ENCODE measurements at regions of chr12 and their contacts with region 1.

Region 1: DNA sequence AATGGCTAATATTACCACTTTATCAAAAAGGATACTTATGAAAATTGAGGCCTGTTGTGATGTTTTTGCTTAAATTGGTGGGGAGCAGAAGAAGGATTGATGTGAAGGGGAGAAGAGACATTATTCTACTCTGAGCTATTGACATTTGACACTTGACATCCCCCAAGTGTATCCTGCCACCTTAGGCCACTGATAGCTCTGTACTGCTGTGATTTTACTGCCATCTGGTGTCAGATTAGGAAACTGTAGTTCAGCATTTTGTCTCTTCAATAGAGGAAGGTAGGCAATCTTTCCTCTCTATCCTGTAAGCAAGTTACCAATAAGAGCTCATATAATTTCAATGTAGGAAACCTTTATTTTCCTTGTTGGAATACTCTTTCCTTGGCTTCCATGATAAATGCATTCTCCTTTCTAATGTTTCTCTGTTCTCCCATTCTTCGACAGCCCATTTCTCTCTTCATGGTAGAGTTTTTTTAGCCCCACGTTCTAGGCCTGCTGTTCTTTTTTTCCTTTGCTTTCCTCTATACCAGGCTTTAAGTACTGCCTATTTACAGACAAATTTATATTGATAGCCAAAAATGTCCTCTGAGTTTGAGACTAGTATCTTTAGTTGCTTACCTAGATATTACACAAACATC is 46.3 kb downstream of the PPHLN1 start:
- DNase-seq: peak; percentile 33
- H3K4me3 Mint-ChIP-seq: no peak overlapping the region
- H3K27ac Mint-ChIP-seq: no peak overlapping the region
- H3K4me1 Mint-ChIP-seq: peaks cover 3% of the 10 kb centered on the region
- H3K27me3 Mint-ChIP-seq: no peaks in the 10 kb centered on the region

Region 2: GRCh38 chr12:41277116-41277945 is 1094.9 kb before region 1 on chr12:
- CTCF ChIA-PET with region 1: no interaction called
- intact Hi-C with region 1: loop called (anchors 1 kb)
- DNase-seq: peak; percentile 28
- H3K4me3 Mint-ChIP-seq: no peak overlapping the region
- H3K27ac Mint-ChIP-seq: no peak overlapping the region
- H3K4me1 Mint-ChIP-seq: no peaks in the 10 kb centered on the region
- H3K27me3 Mint-ChIP-seq: no peaks in the 10 kb centered on the region

Region 3: DNA sequence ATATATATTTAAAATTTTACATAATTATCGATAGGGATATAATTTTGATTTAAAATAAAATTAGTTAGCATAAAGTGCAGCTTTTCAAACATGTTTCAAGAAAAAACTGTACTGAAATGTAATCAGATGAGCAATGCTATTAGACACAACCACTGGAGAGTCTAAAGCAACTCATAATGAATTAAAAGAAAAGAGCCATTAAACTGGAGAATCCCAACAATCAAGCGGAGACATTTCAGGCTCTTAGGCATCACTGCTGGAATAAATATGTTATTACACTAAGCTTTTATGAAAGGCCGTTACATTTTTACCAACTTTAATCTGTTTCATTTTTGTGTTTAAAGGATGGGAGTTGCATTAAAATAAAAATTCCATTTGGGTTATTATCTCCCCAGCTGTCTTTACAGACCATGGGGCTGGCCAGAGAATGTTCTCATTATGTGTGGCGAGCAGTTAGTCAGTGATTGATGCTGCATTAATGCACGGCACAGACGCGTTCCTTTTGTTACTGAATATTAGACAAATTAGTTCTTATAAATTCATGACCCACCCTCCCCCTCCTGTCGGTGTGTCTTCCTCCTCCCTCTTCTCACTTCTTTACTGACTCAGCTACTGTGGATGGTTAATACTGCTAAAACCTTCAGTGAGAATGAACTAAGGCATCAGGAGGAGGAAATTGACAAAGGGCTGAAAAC is 1027.3 kb before region 1 on chr12:
- CTCF ChIA-PET with region 1: no interaction called
- intact Hi-C with region 1: no loop called
- DNase-seq: no peak
- H3K4me3 Mint-ChIP-seq: no peak overlapping the region
- H3K27ac Mint-ChIP-seq: no peak overlapping the region
- H3K4me1 Mint-ChIP-seq: no peaks in the 10 kb centered on the region
- H3K27me3 Mint-ChIP-seq: no peaks in the 10 kb centered on the region

Region 4: GRCh38 chr12:42023733-42024494 is 348.4 kb before region 1 on chr12:
- CTCF ChIA-PET with region 1: interaction called, 15 read pairs
- intact Hi-C with region 1: loop called (anchors 2 kb)
- DNase-seq: peak; percentile 80
- H3K4me3 Mint-ChIP-seq: peak overlapping the region; percentile 51
- H3K27ac Mint-ChIP-seq: no peak overlapping the region
- H3K4me1 Mint-ChIP-seq: peaks cover 8% of the 10 kb centered on the region
- H3K27me3 Mint-ChIP-seq: peaks cover 7% of the 10 kb centered on the region

Region 5: DNA sequence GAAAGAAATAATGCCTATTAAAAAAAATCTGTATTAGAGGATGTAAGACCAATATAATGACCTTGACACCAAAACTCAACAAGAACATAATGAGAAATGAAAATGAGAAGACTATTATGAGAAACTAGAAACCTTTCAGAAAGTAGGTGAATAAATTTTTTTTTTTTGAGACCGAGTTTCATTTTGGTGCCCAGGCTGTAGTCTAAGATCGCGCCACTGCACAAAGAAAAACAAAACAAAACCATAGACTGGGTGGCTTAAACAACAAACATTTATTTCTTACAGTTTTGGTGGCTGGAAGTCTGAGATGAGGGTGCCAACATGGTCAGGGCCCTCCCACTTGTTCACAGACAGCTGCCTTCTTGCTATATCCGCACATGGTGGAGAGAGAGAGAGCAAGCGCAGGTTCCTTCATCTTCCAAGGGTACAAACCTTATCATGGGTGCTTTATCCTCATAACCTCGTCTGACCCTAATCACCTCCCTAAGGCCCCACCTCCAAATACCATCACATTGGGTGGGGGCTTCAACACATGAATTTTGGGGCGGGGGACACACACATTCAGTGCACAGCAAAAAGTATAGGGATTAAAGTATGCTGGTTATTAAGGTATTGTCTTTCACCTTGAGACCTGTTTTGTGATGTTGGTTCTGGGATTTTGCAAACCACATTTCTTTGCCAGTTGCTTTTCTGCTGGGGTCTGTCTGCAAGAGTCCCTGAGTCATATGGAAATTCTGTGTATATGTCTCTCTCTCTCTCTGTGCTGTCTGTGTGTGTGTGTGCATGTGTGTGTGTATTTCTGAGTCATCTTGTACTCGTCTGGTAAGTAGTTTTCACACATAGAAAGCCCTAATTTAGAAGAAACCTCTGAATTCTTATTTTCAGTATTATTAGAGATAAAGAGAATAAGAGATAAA is 72.6 kb before region 1 on chr12:
- CTCF ChIA-PET with region 1: interaction called, 5 read pairs
- intact Hi-C with region 1: loop called (anchors 2 kb)
- DNase-seq: peak; percentile 91
- H3K4me3 Mint-ChIP-seq: no peak overlapping the region
- H3K27ac Mint-ChIP-seq: peak overlapping the region; percentile 36
- H3K4me1 Mint-ChIP-seq: peaks cover 14% of the 10 kb centered on the region
- H3K27me3 Mint-ChIP-seq: no peaks in the 10 kb centered on the region

Region 6: GRCh38 chr12:42315108-42315507 is 57.2 kb before region 1 on chr12:
- CTCF ChIA-PET with region 1: no interaction called
- intact Hi-C with region 1: no loop called
- DNase-seq: no peak
- H3K4me3 Mint-ChIP-seq: no peak overlapping the region
- H3K27ac Mint-ChIP-seq: no peak overlapping the region
- H3K4me1 Mint-ChIP-seq: no peaks in the 10 kb centered on the region
- H3K27me3 Mint-ChIP-seq: no peaks in the 10 kb centered on the region

Region 7: DNA sequence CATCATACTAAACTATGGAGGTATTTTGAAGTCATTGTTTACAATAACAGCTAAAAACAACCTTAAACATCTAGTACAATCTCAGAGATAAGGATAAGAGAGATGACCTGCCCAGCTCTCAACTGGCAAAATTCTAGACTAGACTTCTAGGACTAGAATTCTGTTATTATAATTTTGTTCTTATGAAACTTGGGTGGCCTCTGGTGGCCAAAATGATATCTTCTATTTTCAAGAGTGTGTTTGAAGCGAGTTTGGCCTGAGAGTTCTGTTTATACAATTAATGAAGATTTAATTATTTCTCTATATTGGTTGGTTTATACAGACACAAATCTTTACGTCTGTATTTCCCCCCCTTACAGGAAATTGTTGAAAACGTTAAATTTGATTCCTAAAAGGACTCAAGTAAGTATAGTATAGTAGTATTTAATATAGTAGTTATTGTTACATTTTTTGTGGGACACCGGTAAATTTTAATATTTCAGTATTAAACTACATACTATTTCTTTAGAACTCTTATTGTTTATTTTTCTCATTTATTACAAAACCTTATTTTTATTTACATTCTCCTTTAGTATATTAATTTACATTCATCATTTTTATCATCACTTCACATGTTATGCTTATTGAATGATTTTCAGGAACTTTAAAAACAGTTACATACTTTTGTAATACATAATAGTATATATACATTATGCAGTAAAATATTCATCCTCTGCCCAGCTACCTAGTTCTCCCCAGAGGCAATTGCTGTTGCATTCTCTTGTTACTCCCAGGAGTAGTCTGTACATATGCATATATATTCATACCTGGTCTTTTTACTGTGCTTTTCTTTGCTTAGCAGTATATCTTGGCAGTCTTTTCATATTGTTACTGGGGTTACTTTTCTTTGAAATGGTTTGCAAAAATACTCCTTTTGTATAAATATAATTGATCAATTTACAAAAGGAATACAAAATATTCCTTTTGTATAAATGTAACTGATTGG is 39.7 kb before region 1 on chr12:
- CTCF ChIA-PET with region 1: interaction called, 16 read pairs
- intact Hi-C with region 1: no loop called
- DNase-seq: peak; percentile 32
- H3K4me3 Mint-ChIP-seq: no peak overlapping the region
- H3K27ac Mint-ChIP-seq: no peak overlapping the region
- H3K4me1 Mint-ChIP-seq: peaks cover 58% of the 10 kb centered on the region
- H3K27me3 Mint-ChIP-seq: no peaks in the 10 kb centered on the region